Stomach (tissue), 19 donors: ENCODE measurements at regions of chr19 and their contacts with region 1.

Region 1: GRCh38 chr19:4811328-4812131 is 20.0 kb downstream of the TICAM1 start:
- DNase-seq: peak; percentile 88 to 92
- H3K4me3 ChIP-seq: no peak overlapping the region
- H3K27ac ChIP-seq: peak overlapping the region in 4 of 5 donors; percentile 79 to 92 (median 87)
- H3K4me1 ChIP-seq: peaks cover 22 to 58% (median 34%) of the 10 kb centered on the region in 4 donors
- H3K27me3 ChIP-seq: no peaks in the 10 kb centered on the region
- CTCF ChIP-seq: peak in 6 of 7 experiments; percentile 18 to 93 (median 90)
- EP300 ChIP-seq: no peak
- POLR2A ChIP-seq: no peak

Region 2: GRCh38 chr19:4859697-4860096 is 48.2 kb after region 1 on chr19:
- intact Hi-C with region 1: loop called (anchors 5 kb)
- DNase-seq: no peak
- H3K4me3 ChIP-seq: no peak overlapping the region
- H3K27ac ChIP-seq: no peak overlapping the region
- H3K4me1 ChIP-seq: peaks cover 6 to 16% (median 7%) of the 10 kb centered on the region in 4 donors
- H3K27me3 ChIP-seq: no peaks in the 10 kb centered on the region
- CTCF ChIP-seq: no peak
- EP300 ChIP-seq: no peak
- POLR2A ChIP-seq: no peak

Region 3: DNA sequence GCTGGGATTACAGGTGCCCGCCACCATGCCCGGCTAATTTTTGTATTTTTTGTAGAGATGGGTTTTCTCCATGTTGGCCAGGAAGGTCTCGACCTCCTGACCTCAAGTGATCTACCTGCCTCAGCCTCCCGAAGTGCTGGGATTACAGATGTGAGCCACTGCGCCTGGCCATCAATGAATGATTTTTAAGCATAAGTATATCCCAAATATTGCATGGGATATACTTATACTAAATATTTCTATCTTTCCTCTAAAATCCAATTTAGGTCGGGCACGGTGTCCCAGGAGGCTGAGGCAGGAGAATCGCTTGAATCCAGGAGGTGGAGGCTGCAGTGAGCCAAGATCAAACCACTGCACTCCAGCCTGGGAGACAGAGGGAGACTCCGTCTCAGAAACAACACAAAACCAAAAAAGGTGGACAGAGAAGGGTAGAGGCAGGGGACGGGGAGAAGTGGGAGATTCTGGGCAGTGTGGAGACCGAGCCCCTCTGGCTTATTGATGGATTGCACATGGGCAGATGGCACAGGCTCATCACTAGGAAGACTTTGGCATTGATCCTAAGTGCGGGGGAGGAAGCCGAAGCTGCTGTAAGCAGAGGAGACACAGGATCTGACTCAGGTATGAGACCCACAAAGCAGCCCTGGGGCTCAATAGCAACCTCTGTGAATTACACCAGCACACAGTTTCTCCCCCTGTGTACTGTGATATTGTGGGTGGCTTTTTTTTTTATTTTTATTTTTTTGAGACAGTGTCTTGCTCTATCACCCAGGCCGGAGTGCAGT is 77.7 kb after region 1 on chr19:
- intact Hi-C with region 1: no loop called
- DNase-seq: no peak
- H3K4me3 ChIP-seq: no peak overlapping the region
- H3K27ac ChIP-seq: no peak overlapping the region
- H3K4me1 ChIP-seq: no peaks in the 10 kb centered on the region
- H3K27me3 ChIP-seq: peaks cover 0 to 19% (median 0%) of the 10 kb centered on the region in 3 donors
- CTCF ChIP-seq: no peak
- EP300 ChIP-seq: no peak
- POLR2A ChIP-seq: no peak

Region 4: DNA sequence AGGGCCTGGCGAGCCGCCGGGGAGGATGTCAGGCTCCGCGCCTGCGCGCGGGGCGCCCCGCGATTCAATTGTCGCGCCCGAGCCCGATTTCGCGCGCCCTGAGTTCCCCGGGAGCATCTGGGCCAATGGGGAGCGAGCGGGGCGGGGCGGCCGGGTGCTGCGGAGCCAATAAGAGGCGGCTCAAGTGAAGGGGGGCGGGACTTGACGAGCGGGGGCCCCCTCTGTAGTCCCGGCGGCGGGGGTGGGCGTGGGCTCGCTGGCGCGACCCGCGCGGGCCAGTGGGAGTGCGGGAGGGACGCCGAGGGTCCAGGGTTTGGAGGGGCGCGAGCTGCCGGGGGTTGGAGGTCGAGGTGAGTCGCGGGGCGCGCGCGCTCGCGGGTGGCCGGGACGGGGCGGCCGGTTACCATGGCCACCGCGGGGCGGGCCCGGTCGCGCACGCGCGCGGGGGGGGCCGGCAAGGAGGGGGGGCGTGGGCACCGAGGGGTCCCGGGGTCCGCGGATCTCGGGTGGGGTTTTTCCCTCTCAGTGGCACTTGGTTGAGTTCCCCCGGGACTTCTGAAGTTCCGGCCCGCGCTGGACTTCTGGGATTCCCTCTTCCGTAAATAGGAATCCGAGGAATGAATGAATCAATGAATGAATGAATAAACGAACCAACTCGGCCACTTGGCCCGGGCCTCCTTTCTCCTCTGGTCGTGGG is 98.5 kb after region 1 on chr19:
- intact Hi-C with region 1: loop called (anchors 2 kb)
- DNase-seq: peak; percentile 93 to 97
- H3K4me3 ChIP-seq: peak overlapping the region; percentile 66 to 82 (median 74)
- H3K27ac ChIP-seq: peak overlapping the region in 4 of 5 donors; percentile 9 to 71 (median 52)
- H3K4me1 ChIP-seq: peaks cover 24 to 56% (median 37%) of the 10 kb centered on the region in 4 donors
- H3K27me3 ChIP-seq: peaks cover 0 to 15% (median 10%) of the 10 kb centered on the region in 3 donors
- CTCF ChIP-seq: no peak
- EP300 ChIP-seq: no peak
- POLR2A ChIP-seq: no peak